ENCODE measurements at regions of chr3 and their contacts with region 1.

Region 1: DNA sequence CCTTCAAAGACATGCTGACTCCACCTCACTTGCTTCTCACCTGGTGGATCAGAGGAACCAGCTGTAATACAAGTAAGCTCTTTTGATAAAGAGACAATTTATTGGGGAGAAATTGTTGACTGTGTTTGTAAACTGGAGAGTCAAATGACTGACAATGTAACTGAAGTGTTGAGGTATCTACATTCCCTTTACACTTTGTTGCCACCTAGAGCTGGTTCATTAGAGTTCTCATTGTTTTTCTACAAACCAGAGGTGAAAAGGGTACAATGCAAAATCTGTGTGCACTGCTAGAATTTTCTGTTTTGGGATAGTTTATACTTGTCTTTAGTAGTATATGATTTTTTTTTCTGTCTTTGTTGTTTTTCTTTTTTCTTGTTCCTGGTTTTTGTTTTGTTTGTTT is 8.7 kb upstream of the LRRC58 start:
- DNase-seq: peak in 2 of 14 experiments; percentile 12 to 19
- ATAC-seq: peak; percentile 41
- H3K4me3 ChIP-seq: no peak overlapping the region
- H3K4me3 Mint-ChIP-seq: no peak overlapping the region
- H3K27ac ChIP-seq: no peak overlapping the region
- H3K27ac Mint-ChIP-seq: no peak overlapping the region
- H3K4me1 ChIP-seq: no peaks in the 10 kb centered on the region
- H3K4me1 Mint-ChIP-seq: no peaks in the 10 kb centered on the region
- H3K27me3 ChIP-seq: peaks cover 0 to 5% of the 10 kb centered on the region in 2 experiments
- H3K27me3 Mint-ChIP-seq: peaks cover 36% of the 10 kb centered on the region
- CTCF ChIP-seq: peak; percentile 24

Region 2: GRCh38 chr3:120417272-120417911 is 59.6 kb after region 1 on chr3:
- CTCF ChIA-PET with region 1: interaction called, 3 read pairs
- POLR2A ChIA-PET with region 1: no interaction called
- intact Hi-C with region 1: loop called in 1 of 2 experiments (anchors 5 kb)
- DNase-seq: peak; percentile 69 to 91 (median 76)
- ATAC-seq: peak; percentile 99
- H3K4me3 ChIP-seq: peak overlapping the region; percentile 51
- H3K4me3 Mint-ChIP-seq: peak overlapping the region; percentile 77
- H3K27ac ChIP-seq: no peak overlapping the region
- H3K27ac Mint-ChIP-seq: no peak overlapping the region
- H3K4me1 ChIP-seq: peaks cover 18% of the 10 kb centered on the region
- H3K4me1 Mint-ChIP-seq: peaks cover 14% of the 10 kb centered on the region
- H3K27me3 ChIP-seq: no peaks in the 10 kb centered on the region
- H3K27me3 Mint-ChIP-seq: peaks cover 5% of the 10 kb centered on the region
- CTCF ChIP-seq: peak; percentile 87